ENCODE measurements at regions of chr2 and their contacts with region 1.

Region 1: DNA sequence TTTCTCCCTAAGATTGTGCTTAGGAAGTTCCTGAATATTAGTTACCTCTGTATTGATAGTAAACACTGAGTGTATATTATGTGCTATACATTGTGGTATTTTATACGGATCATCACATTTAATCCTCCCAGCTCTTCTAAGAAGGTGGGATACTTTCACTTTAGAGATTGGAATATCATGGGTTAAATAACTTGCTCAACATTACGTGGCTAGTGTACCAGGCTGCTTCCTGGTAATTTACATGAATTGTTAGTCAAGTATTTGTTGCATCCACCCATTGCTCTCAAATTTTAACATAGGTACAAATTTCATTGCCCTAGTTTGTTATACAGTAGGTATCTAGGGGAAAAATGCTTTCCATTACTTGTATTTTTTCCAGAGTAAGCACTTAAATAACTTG is 21.4 kb downstream of the FAM98A start:
- DNase-seq: no peak
- ATAC-seq: no peak
- H3K4me3 ChIP-seq: no peak overlapping the region
- H3K27ac ChIP-seq: no peak overlapping the region
- H3K4me1 ChIP-seq: peaks cover 0 to 17% (median 5%) of the 10 kb centered on the region in 9 donors
- H3K27me3 ChIP-seq: no peaks in the 10 kb centered on the region
- CTCF ChIP-seq: no peak

Region 2: GRCh38 chr2:33406622-33407021 is 171.0 kb before region 1 on chr2:
- intact Hi-C with region 1: loop called in 7 of 10 experiments (anchors 5 to 10 kb)
- DNase-seq: no peak
- ATAC-seq: no peak
- H3K4me3 ChIP-seq: no peak overlapping the region
- H3K27ac ChIP-seq: no peak overlapping the region
- H3K4me1 ChIP-seq: peaks cover 0 to 12% (median 0%) of the 10 kb centered on the region in 9 donors
- H3K27me3 ChIP-seq: no peaks in the 10 kb centered on the region
- CTCF ChIP-seq: no peak

Region 3: GRCh38 chr2:33645861-33646260 is 68.2 kb after region 1 on chr2:
- intact Hi-C with region 1: no loop called
- DNase-seq: no peak
- ATAC-seq: no peak
- H3K4me3 ChIP-seq: no peak overlapping the region
- H3K27ac ChIP-seq: no peak overlapping the region
- H3K4me1 ChIP-seq: no peaks in the 10 kb centered on the region
- H3K27me3 ChIP-seq: no peaks in the 10 kb centered on the region
- CTCF ChIP-seq: no peak

Measured in heart right ventricle (tissue), 16 donors.